Panc1 (cell line): ENCODE measurements at regions of chr1 and their contacts with region 1.

Region 1: GRCh38 chr1:84603941-84604830 is 29.9 kb upstream of the CTBS start:
- DNase-seq: peak; percentile 97
- ATAC-seq: peak; percentile 88
- H3K4me3 ChIP-seq: peak overlapping the region; percentile 39 to 63
- H3K27ac ChIP-seq: peak overlapping the region; percentile 82
- H3K4me1 ChIP-seq: peaks cover 48% of the 10 kb centered on the region
- H3K27me3 ChIP-seq: no peaks in the 10 kb centered on the region
- CTCF ChIP-seq: peak; percentile 100

Region 2: DNA sequence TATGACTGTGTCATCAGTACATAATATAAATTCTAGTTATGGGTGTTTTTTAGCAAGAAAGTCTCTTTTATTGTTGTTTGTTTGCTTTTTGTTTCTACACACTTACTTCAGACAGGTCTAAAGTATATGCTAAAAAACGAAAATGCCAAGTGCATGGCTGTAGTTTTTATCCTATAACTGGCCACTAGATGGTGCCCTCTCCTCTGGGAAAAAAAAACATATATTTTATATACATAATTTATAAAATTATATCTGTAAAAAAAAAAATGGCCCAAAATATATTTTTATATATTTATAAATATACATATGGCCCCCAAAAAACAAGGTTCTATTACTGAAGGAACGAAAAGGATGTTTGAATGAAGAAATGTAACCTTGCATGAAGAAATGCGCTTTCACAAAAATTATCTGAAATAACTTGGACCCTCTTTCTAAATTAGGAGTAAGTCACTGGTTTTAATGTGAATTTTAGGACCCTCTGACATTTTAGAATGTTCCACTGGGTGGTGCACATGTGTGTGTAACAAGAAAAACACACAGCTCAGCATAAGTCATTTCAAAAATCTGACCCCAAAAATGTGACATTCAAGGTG is 698.8 kb before region 1 on chr1:
- CTCF ChIA-PET with region 1: no interaction called
- POLR2A ChIA-PET with region 1: no interaction called
- in situ Hi-C with region 1: loop called (anchors 25 kb)
- intact Hi-C with region 1: loop called (anchors 10 kb)
- DNase-seq: peak; percentile 43
- ATAC-seq: no peak
- H3K4me3 ChIP-seq: no peak overlapping the region
- H3K27ac ChIP-seq: no peak overlapping the region
- H3K4me1 ChIP-seq: no peaks in the 10 kb centered on the region
- H3K27me3 ChIP-seq: no peaks in the 10 kb centered on the region
- CTCF ChIP-seq: peak; percentile 81; the same call in 1 of the 2 replicates

Region 3: GRCh38 chr1:84048820-84049219 is 555.4 kb before region 1 on chr1:
- CTCF ChIA-PET with region 1: no interaction called
- POLR2A ChIA-PET with region 1: no interaction called
- in situ Hi-C with region 1: no loop called
- intact Hi-C with region 1: no loop called
- DNase-seq: no peak
- ATAC-seq: no peak
- H3K4me3 ChIP-seq: no peak overlapping the region
- H3K27ac ChIP-seq: no peak overlapping the region
- H3K4me1 ChIP-seq: no peaks in the 10 kb centered on the region
- H3K27me3 ChIP-seq: no peaks in the 10 kb centered on the region
- CTCF ChIP-seq: no peak

Region 4: DNA sequence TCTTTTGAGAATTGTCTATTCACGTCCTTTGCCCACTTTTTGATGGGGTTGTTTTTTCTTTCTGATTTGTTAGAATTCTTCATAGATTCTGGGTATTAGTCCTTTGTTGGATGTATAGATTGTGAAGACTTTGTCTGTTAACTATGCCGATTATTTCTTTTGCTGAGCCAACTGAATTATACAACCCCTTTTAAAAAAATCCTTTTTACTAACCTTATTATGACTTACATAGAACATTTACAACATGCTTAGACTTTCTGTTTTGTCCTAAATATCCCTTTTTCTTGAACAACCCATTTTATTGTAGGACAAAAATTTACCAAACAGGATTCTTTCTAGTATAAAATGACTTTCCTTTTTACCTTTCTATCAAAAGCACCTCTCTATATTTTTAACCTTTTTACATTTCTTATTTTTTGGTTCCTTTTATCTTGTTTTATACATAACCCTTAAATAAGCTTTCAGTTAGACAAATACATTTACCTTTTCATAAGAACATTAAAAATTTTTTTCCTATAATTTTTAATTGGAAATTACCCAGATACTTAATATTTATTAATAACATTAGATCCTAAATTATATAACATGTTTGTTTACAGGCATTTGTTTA is 534.8 kb before region 1 on chr1:
- CTCF ChIA-PET with region 1: no interaction called
- POLR2A ChIA-PET with region 1: no interaction called
- in situ Hi-C with region 1: no loop called
- intact Hi-C with region 1: no loop called
- DNase-seq: no peak
- ATAC-seq: no peak
- H3K4me3 ChIP-seq: no peak overlapping the region
- H3K27ac ChIP-seq: no peak overlapping the region
- H3K4me1 ChIP-seq: no peaks in the 10 kb centered on the region
- H3K27me3 ChIP-seq: no peaks in the 10 kb centered on the region
- CTCF ChIP-seq: no peak

Region 5: GRCh38 chr1:84143796-84144565 is 460.2 kb before region 1 on chr1 and contains the start of gene PRKACB:
- CTCF ChIA-PET with region 1: interaction called, 3 read pairs
- POLR2A ChIA-PET with region 1: no interaction called
- in situ Hi-C with region 1: no loop called
- intact Hi-C with region 1: loop called (anchors 5 kb)
- DNase-seq: peak; percentile 51
- ATAC-seq: peak; percentile 76
- H3K4me3 ChIP-seq: no peak within 1 kb of the TSS
- H3K27ac ChIP-seq: peak within 1 kb of the TSS; percentile 23
- H3K4me1 ChIP-seq: peaks cover 22% of the 10 kb centered on the region
- H3K27me3 ChIP-seq: no peaks in the 10 kb centered on the region
- CTCF ChIP-seq: no peak
- total RNA-seq, gene PRKACB: 54.9 TPM

Region 6: GRCh38 chr1:84506002-84506728 is 98.0 kb before region 1 on chr1 and contains the starts of genes GNG5 and SPATA1:
- CTCF ChIA-PET with region 1: interaction called, 11 read pairs
- POLR2A ChIA-PET with region 1: interaction called, 11 read pairs
- in situ Hi-C with region 1: no loop called
- intact Hi-C with region 1: loop called (anchors 5 kb)
- DNase-seq: peak; percentile 94
- ATAC-seq: peak; percentile 95
- H3K4me3 ChIP-seq: peak within 1 kb of the TSS; percentile 79 to 91
- H3K27ac ChIP-seq: peak within 1 kb of the TSS; percentile 98
- H3K4me1 ChIP-seq: peaks cover 32% of the 10 kb centered on the region
- H3K27me3 ChIP-seq: no peaks in the 10 kb centered on the region
- CTCF ChIP-seq: no peak
- total RNA-seq, gene GNG5: 283 TPM
- total RNA-seq, gene SPATA1: 5.0 TPM

Region 7: GRCh38 chr1:84620720-84621313 is 16.6 kb after region 1 on chr1:
- CTCF ChIA-PET with region 1: interaction called, 7 read pairs
- POLR2A ChIA-PET with region 1: interaction called, 3 read pairs
- in situ Hi-C with region 1: no loop called
- intact Hi-C with region 1: loop called (anchors 1 kb)
- DNase-seq: no peak
- ATAC-seq: peak; percentile 97
- H3K4me3 ChIP-seq: peak overlapping the region; percentile 56 to 61
- H3K27ac ChIP-seq: peak overlapping the region; percentile 80
- H3K4me1 ChIP-seq: peaks cover 9% of the 10 kb centered on the region; the same call in 1 of the 2 replicates
- H3K27me3 ChIP-seq: no peaks in the 10 kb centered on the region
- CTCF ChIP-seq: peak; percentile 100

Region 8: DNA sequence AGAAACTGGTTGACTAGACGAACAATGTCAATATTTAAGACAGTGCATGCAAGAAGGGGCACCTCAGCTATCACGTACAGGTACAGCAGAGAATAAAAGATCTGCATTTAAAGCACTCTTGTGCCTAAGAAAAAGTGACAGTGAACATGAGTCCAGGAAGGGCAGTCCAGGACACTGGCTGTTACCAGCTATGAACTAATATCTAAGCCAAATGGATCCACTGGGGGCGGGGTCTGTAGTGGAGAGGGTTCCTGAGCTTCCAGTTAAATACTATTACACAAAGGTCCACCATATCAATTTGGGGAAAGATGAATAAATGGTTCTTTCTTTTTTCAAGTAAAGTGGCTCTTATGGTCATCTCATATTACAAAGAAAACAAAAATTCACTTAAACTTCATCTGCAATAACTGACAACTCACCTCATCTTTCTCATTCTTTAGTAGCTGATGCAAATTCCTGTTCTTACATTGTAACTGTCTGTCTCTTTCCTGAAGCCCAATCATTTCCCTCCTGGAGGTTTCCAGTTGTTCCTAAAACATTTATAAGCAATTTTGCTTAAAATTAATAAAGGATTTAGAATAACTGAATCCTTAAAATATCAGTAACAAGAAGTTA is 61.6 kb after region 1 on chr1:
- CTCF ChIA-PET with region 1: no interaction called
- POLR2A ChIA-PET with region 1: no interaction called
- in situ Hi-C with region 1: no loop called
- intact Hi-C with region 1: no loop called
- DNase-seq: no peak
- ATAC-seq: no peak
- H3K4me3 ChIP-seq: no peak overlapping the region
- H3K27ac ChIP-seq: no peak overlapping the region
- H3K4me1 ChIP-seq: no peaks in the 10 kb centered on the region
- H3K27me3 ChIP-seq: no peaks in the 10 kb centered on the region
- CTCF ChIP-seq: no peak

Region 9: GRCh38 chr1:85200870-85201339 is 596.7 kb after region 1 on chr1 and contains the start of gene SYDE2:
- CTCF ChIA-PET with region 1: no interaction called
- POLR2A ChIA-PET with region 1: no interaction called
- in situ Hi-C with region 1: no loop called
- intact Hi-C with region 1: no loop called
- DNase-seq: no peak
- ATAC-seq: peak; percentile 93
- H3K4me3 ChIP-seq: peak within 1 kb of the TSS; percentile 78 to 81
- H3K27ac ChIP-seq: peak within 1 kb of the TSS; percentile 90
- H3K4me1 ChIP-seq: peaks cover 59% of the 10 kb centered on the region
- H3K27me3 ChIP-seq: no peaks in the 10 kb centered on the region
- CTCF ChIP-seq: no peak; the same call in 1 of the 2 replicates
- total RNA-seq, gene SYDE2: 18.2 TPM